ENCODE measurements at regions of chr11 and their contacts with region 1.

Region 1: DNA sequence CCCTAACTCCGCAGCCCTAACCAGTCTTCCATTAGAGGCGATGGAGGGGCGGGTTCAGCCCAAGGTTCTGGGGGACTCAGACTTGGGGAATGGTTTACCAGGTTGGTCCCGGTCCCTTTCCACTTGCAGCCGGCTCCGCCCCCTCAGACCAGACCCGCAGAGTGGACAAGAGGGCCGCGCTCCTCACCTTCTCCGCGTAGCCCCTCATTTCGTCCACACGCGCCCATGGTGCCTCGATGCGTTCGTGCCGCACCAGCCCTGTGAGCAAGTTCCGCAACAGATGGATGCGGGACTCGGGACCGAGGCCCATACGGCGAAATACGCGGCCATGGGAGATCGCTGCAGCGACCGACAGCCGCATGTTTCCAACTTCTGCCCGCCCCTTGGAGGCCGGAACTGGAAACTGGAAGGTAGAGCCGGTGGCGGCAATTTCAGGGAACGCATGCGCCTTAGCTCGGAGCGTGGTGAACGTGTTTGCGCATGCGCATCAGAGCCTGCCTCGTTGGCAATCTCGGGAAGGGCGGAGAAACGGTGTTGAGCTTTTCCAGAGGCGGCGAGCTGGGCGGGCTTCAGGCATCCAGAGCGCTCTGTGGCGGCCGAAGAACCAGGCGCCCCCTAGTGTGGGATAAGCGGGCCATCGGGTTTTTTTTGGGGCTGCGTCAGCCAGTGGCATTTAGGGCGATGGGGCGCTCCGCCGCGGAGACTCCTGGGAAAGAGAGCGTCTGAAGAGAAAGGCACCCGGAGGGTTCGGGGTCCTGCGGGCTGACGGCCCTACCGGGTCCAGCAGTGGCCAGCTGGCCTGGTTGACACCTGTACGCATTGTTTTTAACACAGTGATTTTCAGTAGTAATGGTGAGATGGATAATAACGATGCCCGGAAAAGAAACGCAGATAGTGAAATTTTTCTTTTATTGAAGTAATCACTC is at the start of gene MRPL17:
- DNase-seq: peak; percentile 96 to 100
- H3K4me3 ChIP-seq: peak within 1 kb of the TSS; percentile 81 to 90
- H3K27ac ChIP-seq: peak within 1 kb of the TSS; percentile 80 to 93
- H3K4me1 ChIP-seq: peaks cover 0 to 9% of the 10 kb centered on the region in 2 donors
- H3K27me3 ChIP-seq: no peaks in the 10 kb centered on the region
- CTCF ChIP-seq: peak; percentile 83 to 96 (median 89)
- total RNA-seq, gene MRPL17: 12.9 TPM

Region 2: DNA sequence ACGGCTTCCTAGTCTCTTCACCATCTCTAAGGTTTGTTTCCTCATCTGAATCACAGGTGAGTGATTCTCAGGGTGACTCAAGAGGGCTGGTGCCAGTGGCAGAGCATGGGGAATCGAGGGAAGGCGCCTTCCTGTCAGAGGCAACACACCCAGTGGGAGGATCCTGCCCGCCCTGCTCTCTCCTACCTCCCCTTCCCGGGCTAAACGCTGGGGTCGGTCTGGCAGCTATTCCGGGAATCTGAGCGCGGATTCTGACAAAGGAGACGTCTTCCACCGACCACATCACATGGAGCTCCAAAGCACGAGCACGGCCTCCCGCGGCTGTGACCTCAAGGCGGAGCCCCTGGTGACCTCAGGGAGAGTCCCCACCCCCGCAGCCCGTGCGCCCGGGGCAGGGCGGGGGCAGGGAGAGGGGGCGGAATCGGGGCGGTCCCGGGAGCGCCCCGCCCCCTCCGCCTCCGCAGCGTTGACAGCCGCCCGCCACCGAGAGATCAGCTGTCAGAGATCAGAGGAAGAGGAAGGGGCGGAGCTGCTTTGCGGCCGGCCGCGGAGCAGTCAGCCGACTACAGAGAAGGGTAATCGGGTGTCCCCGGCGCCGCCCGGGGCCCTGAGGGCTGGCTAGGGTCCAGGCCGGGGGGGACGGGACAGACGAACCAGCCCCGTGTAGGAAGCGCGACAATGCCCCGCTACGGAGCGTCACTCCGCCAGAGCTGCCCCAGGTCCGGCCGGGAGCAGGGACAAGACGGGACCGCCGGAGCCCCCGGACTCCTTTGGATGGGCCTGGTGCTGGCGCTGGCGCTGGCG is 293.1 kb before region 1 on chr11 and contains the start of gene SMPD1:
- intact Hi-C with region 1: loop called (anchors 5 kb)
- DNase-seq: peak; percentile 92 to 96
- H3K4me3 ChIP-seq: peak within 1 kb of the TSS; percentile 89 to 96
- H3K27ac ChIP-seq: peak within 1 kb of the TSS; percentile 90 to 95
- H3K4me1 ChIP-seq: peaks cover 9 to 14% of the 10 kb centered on the region in 2 donors
- H3K27me3 ChIP-seq: no peaks in the 10 kb centered on the region
- CTCF ChIP-seq: no peak
- total RNA-seq, gene SMPD1: 48.6 TPM

Region 3: GRCh38 chr11:6531267-6531752 is 151.9 kb before region 1 on chr11:
- intact Hi-C with region 1: loop called (anchors 5 kb)
- DNase-seq: no peak
- H3K4me3 ChIP-seq: no peak overlapping the region
- H3K27ac ChIP-seq: no peak overlapping the region
- H3K4me1 ChIP-seq: no peaks in the 10 kb centered on the region
- H3K27me3 ChIP-seq: no peaks in the 10 kb centered on the region
- CTCF ChIP-seq: peak; percentile 67 to 70 (median 70)

Region 4: GRCh38 chr11:6619004-6619745 is 64.0 kb before region 1 on chr11 and contains the start of gene TPP1:
- intact Hi-C with region 1: loop called (anchors 1 kb)
- DNase-seq: peak; percentile 92 to 99
- H3K4me3 ChIP-seq: peak within 1 kb of the TSS; percentile 69 to 76
- H3K27ac ChIP-seq: peak within 1 kb of the TSS; percentile 81 to 82
- H3K4me1 ChIP-seq: peaks cover 3 to 17% of the 10 kb centered on the region in 2 donors
- H3K27me3 ChIP-seq: no peaks in the 10 kb centered on the region
- CTCF ChIP-seq: no peak
- total RNA-seq, gene TPP1: 96.7 TPM

Region 5: GRCh38 chr11:6646918-6647679 is 36.1 kb before region 1 on chr11:
- intact Hi-C with region 1: no loop called
- DNase-seq: peak in 1 of 2 donors; percentile 68
- H3K4me3 ChIP-seq: peak overlapping the region in 1 of 2 donors; percentile 25
- H3K27ac ChIP-seq: peak overlapping the region; percentile 78 to 82
- H3K4me1 ChIP-seq: peaks cover 14 to 26% of the 10 kb centered on the region in 2 donors
- H3K27me3 ChIP-seq: no peaks in the 10 kb centered on the region
- CTCF ChIP-seq: no peak

Region 6: GRCh38 chr11:6825231-6825744 is 142.1 kb after region 1 on chr11:
- intact Hi-C with region 1: no loop called
- DNase-seq: no peak
- H3K4me3 ChIP-seq: no peak overlapping the region
- H3K27ac ChIP-seq: no peak overlapping the region
- H3K4me1 ChIP-seq: no peaks in the 10 kb centered on the region
- H3K27me3 ChIP-seq: no peaks in the 10 kb centered on the region
- CTCF ChIP-seq: no peak

Measured in ascending aorta (tissue), 2 donors.